IMR-90 (cell line): ENCODE measurements at regions of chr20 and their contacts with region 1.

Region 1: DNA sequence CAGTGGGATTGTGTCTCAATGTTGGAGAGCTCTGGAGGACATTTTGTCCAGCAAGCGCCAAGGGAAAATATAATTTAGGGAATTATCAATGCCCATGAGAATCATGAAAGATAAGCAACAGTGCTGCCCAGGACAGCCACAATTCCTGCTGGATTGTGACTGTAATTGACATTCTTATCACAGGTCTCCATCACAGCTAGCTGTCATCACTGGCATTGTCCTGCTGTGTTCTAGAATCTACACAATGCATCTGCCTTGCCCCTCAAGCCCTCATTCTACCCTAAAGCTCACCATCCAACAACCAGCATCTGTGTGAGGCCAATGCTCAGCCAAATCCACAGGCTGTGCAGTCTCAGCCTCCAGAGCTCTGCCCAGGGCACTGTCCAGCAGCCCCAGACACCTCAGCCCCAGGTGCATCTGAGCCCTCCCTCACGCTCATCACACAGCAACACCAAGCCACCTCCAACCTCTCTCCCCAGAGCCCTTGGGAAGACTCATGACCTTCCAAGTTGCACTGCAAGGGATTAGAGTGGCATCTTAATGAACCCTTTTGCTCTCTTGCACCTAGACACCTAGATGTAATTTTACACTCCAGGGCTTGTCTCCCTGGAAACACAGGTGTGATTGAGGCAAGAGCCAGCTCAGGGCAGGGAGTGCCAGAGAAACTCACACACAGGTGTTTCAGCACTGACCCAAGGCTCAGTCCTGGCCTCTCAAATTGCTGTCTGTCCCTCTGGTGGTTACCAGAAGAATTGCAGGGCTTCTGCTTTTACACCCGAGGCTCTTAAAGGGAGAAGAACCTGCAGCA is 85.3 kb upstream of the PHACTR3 start:
- DNase-seq: peak; percentile 47
- ATAC-seq: peak; percentile 90
- H3K4me3 ChIP-seq: no peak overlapping the region
- H3K27ac ChIP-seq: no peak overlapping the region
- H3K4me1 ChIP-seq: no peaks in the 10 kb centered on the region
- H3K27me3 ChIP-seq: no peaks in the 10 kb centered on the region
- CTCF ChIP-seq: peak; percentile 64
- POLR2A ChIP-seq: no peak
- RAD21 ChIP-seq: no peak

Region 2: DNA sequence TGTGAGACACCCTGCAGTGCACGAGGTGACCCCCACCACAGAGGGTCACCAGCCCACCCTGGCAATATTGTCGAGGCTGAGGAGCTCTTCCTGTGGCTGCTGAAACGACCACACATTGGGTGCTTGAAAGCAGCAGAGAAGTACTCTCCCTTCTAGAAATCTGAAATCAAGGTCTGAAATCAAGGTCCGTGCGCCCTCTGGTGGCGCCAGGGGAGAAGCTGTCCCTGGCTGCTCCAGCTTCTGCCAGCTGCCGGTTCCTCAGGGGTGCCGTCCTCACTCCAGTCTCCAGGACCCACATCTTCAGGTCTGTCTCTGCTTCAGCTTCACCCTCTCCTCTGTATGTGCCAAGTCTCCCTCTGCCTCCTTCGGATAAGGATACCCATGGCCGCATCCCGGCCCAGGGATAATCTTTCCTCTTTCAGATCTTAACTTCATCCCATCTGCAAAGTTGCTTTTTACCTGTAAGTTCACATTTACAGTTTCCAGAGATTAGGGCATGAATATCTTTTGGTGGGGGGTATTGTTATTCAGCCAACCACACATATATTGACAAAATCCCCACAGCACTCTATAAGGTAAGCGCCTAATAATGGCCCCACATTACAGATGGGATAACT is 23.1 kb before region 1 on chr20:
- CTCF ChIA-PET with region 1: no interaction called
- POLR2A ChIA-PET with region 1: no interaction called
- dilution Hi-C with region 1: no loop called
- in situ Hi-C with region 1: no loop called
- intact Hi-C with region 1: no loop called
- DNase-seq: peak; percentile 53
- ATAC-seq: peak; percentile 89
- H3K4me3 ChIP-seq: no peak overlapping the region
- H3K27ac ChIP-seq: no peak overlapping the region
- H3K4me1 ChIP-seq: no peaks in the 10 kb centered on the region
- H3K27me3 ChIP-seq: no peaks in the 10 kb centered on the region
- CTCF ChIP-seq: peak; percentile 79
- POLR2A ChIP-seq: no peak
- RAD21 ChIP-seq: peak; percentile 63

Region 3: GRCh38 chr20:59583428-59584045 is 64.5 kb after region 1 on chr20:
- CTCF ChIA-PET with region 1: no interaction called
- POLR2A ChIA-PET with region 1: no interaction called
- dilution Hi-C with region 1: no loop called
- in situ Hi-C with region 1: no loop called
- intact Hi-C with region 1: no loop called
- DNase-seq: no peak
- ATAC-seq: no peak
- H3K4me3 ChIP-seq: no peak overlapping the region
- H3K27ac ChIP-seq: no peak overlapping the region
- H3K4me1 ChIP-seq: no peaks in the 10 kb centered on the region
- H3K27me3 ChIP-seq: no peaks in the 10 kb centered on the region
- CTCF ChIP-seq: no peak
- POLR2A ChIP-seq: no peak
- RAD21 ChIP-seq: no peak

Region 4: DNA sequence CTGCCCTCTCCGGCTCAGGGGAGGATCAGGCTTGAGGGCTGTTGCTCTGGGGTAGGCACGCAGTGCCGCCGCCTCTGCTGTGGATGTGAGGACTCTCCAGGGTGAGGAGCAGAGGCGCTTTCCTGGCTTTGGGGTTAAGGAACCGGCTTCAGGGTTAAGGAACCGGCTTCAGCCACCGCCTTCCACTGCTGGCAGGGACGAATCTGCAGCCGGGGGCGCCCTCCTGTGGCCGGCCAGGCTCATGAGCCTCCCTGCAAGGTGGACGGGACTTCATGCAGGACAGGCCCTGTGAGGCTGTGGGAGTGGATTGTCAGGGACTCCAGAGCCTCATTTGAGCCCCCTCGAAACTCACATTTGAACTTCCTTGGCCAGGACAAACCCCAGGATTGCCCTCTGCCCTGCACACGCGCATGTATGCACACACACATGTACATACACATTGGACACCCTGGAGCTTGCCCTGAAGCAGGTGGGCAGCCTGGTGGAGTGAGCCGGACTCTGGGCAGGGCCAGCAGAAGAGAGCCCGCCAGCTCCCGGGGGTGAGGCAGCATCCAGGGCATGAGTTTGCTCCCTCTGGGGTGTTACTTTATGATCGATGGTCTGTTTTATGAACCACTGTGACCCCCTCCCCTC is 232.1 kb after region 1 on chr20:
- CTCF ChIA-PET with region 1: no interaction called
- POLR2A ChIA-PET with region 1: no interaction called
- dilution Hi-C with region 1: no loop called
- in situ Hi-C with region 1: no loop called
- intact Hi-C with region 1: loop called (anchors 5 kb)
- DNase-seq: peak; percentile 24
- ATAC-seq: peak; percentile 81
- H3K4me3 ChIP-seq: no peak overlapping the region
- H3K27ac ChIP-seq: no peak overlapping the region
- H3K4me1 ChIP-seq: no peaks in the 10 kb centered on the region
- H3K27me3 ChIP-seq: no peaks in the 10 kb centered on the region
- CTCF ChIP-seq: peak; percentile 63
- POLR2A ChIP-seq: no peak
- RAD21 ChIP-seq: peak; percentile 65